Posterior vena cava (tissue), 2 donors: ENCODE measurements at regions of chr1 and their contacts with region 1.

Region 1: DNA sequence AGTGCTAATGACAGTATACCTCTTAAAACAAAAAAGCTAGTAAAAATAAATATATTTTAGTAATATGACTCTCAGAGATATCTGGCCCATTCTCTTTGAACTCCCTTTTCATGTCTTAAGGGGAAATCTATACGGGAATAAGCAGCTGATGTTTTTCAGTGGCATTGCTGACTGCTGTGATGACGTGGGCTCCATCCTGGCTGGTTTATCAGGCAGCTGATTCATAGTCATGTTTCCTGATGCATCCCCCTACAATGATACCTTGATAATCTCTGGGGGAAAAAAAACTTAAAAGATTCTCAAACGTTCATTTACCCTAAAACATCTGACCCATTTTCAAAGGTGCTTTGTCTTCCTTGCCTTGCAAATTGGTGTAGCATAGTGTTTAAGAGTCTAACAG is 53.8 kb downstream of the ABCA4 start:
- DNase-seq: no peak

Region 2: GRCh38 chr1:92736395-92736794 is 1330.8 kb before region 1 on chr1:
- intact Hi-C with region 1: no loop called
- DNase-seq: no peak

Region 3: GRCh38 chr1:94153133-94153532 is 85.9 kb after region 1 on chr1:
- intact Hi-C with region 1: loop called in 1 of 2 experiments (anchors 2 kb)
- DNase-seq: no peak